Mucosa of descending colon (tissue), 3 donors: ENCODE measurements at regions of chr2 and their contacts with region 1.

Region 1: DNA sequence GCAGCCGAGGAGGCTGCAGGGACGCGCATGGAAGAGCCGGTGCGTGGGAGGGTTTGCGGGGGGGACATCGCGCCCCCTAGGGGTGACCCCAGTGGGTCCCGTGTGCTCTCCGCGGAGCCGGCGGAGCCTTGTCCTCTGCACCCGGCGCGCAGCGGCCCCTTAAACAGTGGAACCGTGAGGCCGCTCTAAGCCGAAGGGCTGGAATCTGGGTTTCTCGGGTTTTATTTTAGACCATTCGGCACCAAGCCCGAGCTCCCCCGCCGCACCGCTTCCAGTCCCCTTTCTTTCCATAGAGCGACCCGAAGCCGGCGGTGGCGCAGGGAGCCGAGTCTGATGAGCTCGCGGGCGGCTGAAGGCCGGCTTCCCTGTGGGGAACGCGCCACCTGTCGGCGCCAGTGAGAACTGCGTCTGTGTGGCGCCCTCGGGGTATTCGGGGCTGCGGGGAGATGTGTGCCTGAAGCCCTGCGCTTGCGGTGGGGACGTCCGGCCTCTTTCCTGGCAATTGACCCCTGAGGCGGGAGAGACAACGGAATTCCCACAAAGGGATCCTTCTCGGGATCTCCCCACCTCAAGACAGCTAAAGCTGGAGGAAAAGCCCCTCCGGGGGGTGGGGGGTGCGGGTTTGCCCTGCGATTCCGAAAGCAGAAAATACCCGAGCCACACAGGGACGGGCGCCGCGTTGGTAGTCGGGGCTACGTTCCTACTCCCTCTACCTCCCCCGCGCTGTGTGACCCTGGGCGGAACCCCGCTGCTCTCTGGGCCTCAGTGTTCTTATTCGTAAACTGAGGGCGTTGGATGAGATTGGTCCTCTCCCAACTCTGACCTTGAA is 8.2 kb upstream of the EN1 start:
- DNase-seq: peak; percentile 72 to 86 (median 85)
- ATAC-seq: peak; percentile 94
- H3K4me3 ChIP-seq: no peak overlapping the region
- H3K4me1 ChIP-seq: peaks cover 4% of the 10 kb centered on the region
- CTCF ChIP-seq: peak; percentile 95

Region 2: DNA sequence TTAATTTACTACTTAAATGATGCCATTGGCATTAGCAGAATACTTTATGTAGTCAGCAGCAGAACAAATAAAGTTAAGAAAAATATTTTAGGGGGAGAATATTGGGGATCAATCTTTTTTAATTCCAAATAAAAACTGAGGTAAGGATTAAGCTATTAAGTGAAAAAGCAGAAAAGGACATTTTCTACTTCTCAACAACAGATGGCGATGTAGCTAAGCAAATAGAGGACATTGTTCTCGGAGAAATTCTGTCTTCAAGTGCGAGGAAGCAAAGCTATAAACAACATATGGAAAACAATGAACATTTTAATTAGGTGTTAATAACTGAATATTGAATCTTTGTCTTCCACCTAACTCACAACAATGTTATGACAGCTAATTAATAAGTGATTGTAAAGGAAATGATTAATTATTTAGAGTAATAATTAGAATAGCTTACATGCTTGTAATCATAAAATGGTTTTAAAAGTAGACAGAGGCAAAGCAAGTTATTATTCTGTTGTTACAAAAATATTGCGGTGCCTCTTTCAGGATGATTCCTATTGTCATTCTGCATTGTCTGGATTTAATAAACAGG is 808.9 kb before region 1 on chr2:
- intact Hi-C with region 1: loop called in 1 of 2 experiments (anchors 10 kb)
- DNase-seq: no peak
- ATAC-seq: no peak
- H3K4me3 ChIP-seq: no peak overlapping the region
- H3K4me1 ChIP-seq: no peaks in the 10 kb centered on the region
- CTCF ChIP-seq: no peak

Region 3: DNA sequence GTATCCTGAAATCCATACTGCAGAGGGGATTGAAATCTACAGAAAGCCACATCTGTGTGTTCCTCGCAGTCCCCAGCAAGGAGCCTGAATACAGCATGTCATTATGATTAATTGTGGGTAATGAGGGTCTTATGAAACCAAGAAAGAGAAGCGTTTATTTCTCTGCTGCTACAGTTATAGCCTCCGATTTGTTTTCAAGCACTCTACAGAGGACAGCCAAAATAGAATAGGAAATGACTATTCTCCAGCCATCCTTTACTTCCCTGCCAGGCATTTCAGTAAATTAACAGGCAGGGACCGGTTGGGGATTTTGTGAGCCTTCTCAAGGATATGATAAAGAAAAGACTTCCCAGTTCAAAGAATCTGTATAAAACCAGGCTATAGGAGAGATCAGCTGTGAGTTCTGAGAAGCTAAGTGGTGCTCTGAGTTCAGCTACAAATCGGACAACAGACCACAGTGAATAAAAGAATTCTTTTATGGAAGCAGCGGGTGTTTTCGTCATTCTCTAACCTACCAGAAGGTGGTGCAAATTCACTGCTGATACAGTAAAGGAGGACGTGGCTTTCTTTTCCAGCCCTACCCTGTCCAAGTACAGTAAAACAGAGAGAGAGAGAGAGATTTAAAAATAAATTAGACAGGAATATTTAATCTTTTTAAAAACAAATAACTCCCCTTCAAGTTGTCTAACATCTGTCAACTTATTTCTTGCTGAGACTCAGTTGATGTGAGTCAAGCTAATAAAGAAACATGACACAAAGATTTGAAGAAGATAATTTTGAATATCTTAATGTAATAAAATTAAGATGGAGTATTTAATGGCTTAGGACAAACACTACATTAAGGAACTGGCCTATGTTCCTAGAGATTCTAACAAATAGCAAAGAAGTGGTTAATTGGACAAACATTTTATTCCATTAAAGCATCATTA is 633.7 kb before region 1 on chr2:
- intact Hi-C with region 1: loop called in 1 of 2 experiments (anchors 5 kb)
- DNase-seq: peak in 1 of 3 donors; percentile 69
- ATAC-seq: peak; percentile 79
- H3K4me3 ChIP-seq: no peak overlapping the region
- H3K4me1 ChIP-seq: peaks cover 18% of the 10 kb centered on the region
- CTCF ChIP-seq: peak; percentile 32